HepG2 (cell line): ENCODE measurements at regions of chr7 and their contacts with region 1.

Region 1: DNA sequence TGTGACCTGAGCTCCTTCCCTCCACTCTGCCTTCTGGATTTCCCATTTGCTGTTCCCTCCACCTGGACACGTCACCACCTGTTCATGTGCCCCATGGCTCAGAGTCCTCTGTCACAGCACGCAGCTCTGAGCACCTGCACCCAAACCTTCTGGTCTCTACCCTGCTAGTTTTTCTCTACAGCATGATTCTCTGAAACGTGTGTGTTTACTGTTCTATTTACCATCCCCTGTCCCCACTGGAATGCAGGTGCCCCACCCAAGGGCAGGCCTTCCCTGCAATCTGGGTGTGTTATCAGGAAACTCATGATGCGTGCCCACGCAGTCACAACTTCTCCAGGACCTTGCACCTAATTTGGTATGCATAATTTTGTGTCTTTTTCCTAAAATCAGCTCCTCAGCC is 284.4 kb upstream of the IGFBP3 start:
- DNase-seq: no peak
- ATAC-seq: no peak
- H3K4me3 ChIP-seq: no peak overlapping the region
- H3K27ac ChIP-seq: no peak overlapping the region
- H3K4me1 ChIP-seq: no peaks in the 10 kb centered on the region
- H3K27me3 ChIP-seq: peaks cover 0 to 14% of the 10 kb centered on the region in 2 experiments; a peak in 1 of 5 replicates
- CTCF ChIP-seq: no peak
- EP300 ChIP-seq: no peak
- POLR2A ChIP-seq: no peak
- RAD21 ChIP-seq: no peak

Region 2: GRCh38 chr7:45599851-45600706 is 605.4 kb before region 1 on chr7:
- CTCF ChIA-PET with region 1: no interaction called
- POLR2A ChIA-PET with region 1: no interaction called
- in situ Hi-C with region 1: no loop called
- intact Hi-C with region 1: no loop called
- DNase-seq: no peak
- ATAC-seq: no peak
- H3K4me3 ChIP-seq: no peak overlapping the region
- H3K27ac ChIP-seq: no peak overlapping the region
- H3K4me1 ChIP-seq: no peaks in the 10 kb centered on the region
- H3K27me3 ChIP-seq: peaks cover 1 to 8% of the 10 kb centered on the region in 2 experiments; a peak in 2 of 5 replicates
- CTCF ChIP-seq: no peak
- EP300 ChIP-seq: no peak
- POLR2A ChIP-seq: no peak
- RAD21 ChIP-seq: no peak

Region 3: GRCh38 chr7:45812946-45813345 is 392.5 kb before region 1 on chr7:
- CTCF ChIA-PET with region 1: no interaction called
- POLR2A ChIA-PET with region 1: no interaction called
- in situ Hi-C with region 1: no loop called
- intact Hi-C with region 1: no loop called
- DNase-seq: no peak
- ATAC-seq: no peak
- H3K4me3 ChIP-seq: no peak overlapping the region
- H3K27ac ChIP-seq: no peak overlapping the region
- H3K4me1 ChIP-seq: no peaks in the 10 kb centered on the region
- H3K27me3 ChIP-seq: no peaks in the 10 kb centered on the region
- CTCF ChIP-seq: no peak
- EP300 ChIP-seq: no peak
- POLR2A ChIP-seq: no peak
- RAD21 ChIP-seq: no peak

Region 4: GRCh38 chr7:46229409-46229808 is 23.9 kb after region 1 on chr7:
- CTCF ChIA-PET with region 1: no interaction called
- POLR2A ChIA-PET with region 1: no interaction called
- in situ Hi-C with region 1: no loop called
- intact Hi-C with region 1: loop called (anchors 1 kb)
- DNase-seq: peak; percentile 10
- ATAC-seq: no peak
- H3K4me3 ChIP-seq: no peak overlapping the region
- H3K27ac ChIP-seq: no peak overlapping the region
- H3K4me1 ChIP-seq: no peaks in the 10 kb centered on the region
- H3K27me3 ChIP-seq: peaks cover 0 to 5% of the 10 kb centered on the region in 2 experiments; a peak in 1 of 5 replicates
- CTCF ChIP-seq: no peak
- EP300 ChIP-seq: no peak
- POLR2A ChIP-seq: no peak
- RAD21 ChIP-seq: no peak

Region 5: DNA sequence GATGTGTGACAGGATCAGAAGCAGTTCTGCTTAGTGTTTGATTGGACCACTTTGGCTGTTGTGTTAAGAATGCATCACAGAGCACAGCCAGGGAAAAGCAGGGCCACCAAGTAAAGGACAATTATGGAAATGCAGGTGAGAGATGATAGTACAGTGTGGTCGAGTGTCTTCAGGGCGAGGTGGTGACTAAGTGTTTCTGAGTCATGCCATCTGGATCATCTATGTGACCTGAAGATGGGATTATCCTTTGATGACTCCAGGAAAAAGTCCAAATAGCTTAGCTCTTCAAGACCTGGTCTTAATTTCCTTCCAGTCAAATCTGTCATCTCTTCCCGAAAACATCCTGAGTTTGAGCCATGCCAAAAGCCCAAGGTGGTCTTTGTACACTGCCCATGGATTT is 238.8 kb after region 1 on chr7:
- CTCF ChIA-PET with region 1: no interaction called
- POLR2A ChIA-PET with region 1: no interaction called
- in situ Hi-C with region 1: no loop called
- intact Hi-C with region 1: no loop called
- DNase-seq: no peak
- ATAC-seq: no peak
- H3K4me3 ChIP-seq: no peak overlapping the region
- H3K27ac ChIP-seq: no peak overlapping the region
- H3K4me1 ChIP-seq: no peaks in the 10 kb centered on the region
- H3K27me3 ChIP-seq: no peaks in the 10 kb centered on the region
- CTCF ChIP-seq: no peak
- EP300 ChIP-seq: no peak
- POLR2A ChIP-seq: no peak
- RAD21 ChIP-seq: no peak